Activated CD4-positive, alpha-beta T cell treated with anti-CD3 and anti-CD28 coated beads for 36 hours (primary cell): ENCODE measurements at regions of chr6 and their contacts with region 1.

Region 1: DNA sequence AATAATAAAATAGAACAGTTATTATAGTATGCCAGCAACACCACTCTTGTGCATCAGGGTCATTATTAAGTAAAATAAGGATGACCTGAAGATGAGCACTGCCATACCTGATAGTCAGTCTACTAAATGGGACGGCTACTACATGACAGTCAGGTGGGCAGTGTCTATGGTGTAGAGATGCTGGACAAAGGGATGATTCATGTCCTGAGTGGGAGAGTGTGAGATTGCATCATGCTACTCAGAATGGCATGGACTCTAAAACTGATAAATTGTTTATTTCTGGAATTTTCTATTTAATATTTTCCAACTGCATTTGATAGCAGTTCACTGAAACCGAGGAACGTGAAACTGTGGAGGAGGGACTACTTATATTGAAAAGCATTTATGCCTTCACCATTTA is 38.8 kb downstream of the SNX9 start:
- DNase-seq: no peak
- ATAC-seq: no peak
- H3K4me3 Mint-ChIP-seq: no peak overlapping the region
- H3K27ac Mint-ChIP-seq: no peak overlapping the region
- H3K4me1 Mint-ChIP-seq: peaks cover 74% of the 10 kb centered on the region
- H3K27me3 Mint-ChIP-seq: no peaks in the 10 kb centered on the region

Region 2: GRCh38 chr6:157885211-157885788 is 23.5 kb after region 1 on chr6:
- CTCF ChIA-PET with region 1: no interaction called
- POLR2A ChIA-PET with region 1: no interaction called
- intact Hi-C with region 1: loop called in 1 of 2 experiments (anchors 1 kb)
- DNase-seq: peak; percentile 78
- ATAC-seq: peak; percentile 89
- H3K4me3 Mint-ChIP-seq: peak overlapping the region; percentile 17
- H3K27ac Mint-ChIP-seq: peak overlapping the region; percentile 92
- H3K4me1 Mint-ChIP-seq: peaks cover 76% of the 10 kb centered on the region
- H3K27me3 Mint-ChIP-seq: no peaks in the 10 kb centered on the region

Region 3: DNA sequence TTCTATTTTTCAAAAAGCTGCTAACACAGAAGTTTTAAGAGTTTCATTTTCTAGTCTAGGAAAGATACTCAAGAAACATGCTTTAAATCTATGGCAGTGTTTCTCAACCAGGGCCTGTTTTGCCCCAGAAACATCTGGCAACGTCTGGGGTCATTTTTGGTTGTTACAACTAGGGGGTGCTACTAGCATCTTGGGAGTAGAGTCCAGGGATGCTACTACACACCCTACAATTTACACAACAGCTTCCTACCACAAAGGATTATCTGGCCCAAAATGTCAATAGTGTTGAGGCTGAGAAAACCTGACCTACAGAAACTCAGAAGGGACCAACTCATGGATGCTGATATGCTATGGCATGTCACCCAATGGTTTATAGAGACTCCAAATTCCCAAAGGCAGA is 281.9 kb after region 1 on chr6:
- CTCF ChIA-PET with region 1: no interaction called
- POLR2A ChIA-PET with region 1: no interaction called
- intact Hi-C with region 1: no loop called
- DNase-seq: peak; percentile 24
- ATAC-seq: no peak
- H3K4me3 Mint-ChIP-seq: no peak overlapping the region
- H3K27ac Mint-ChIP-seq: no peak overlapping the region
- H3K4me1 Mint-ChIP-seq: no peaks in the 10 kb centered on the region
- H3K27me3 Mint-ChIP-seq: no peaks in the 10 kb centered on the region